Ascending aorta (tissue), 2 donors: ENCODE measurements at regions of chr2 and their contacts with region 1.

Region 1: DNA sequence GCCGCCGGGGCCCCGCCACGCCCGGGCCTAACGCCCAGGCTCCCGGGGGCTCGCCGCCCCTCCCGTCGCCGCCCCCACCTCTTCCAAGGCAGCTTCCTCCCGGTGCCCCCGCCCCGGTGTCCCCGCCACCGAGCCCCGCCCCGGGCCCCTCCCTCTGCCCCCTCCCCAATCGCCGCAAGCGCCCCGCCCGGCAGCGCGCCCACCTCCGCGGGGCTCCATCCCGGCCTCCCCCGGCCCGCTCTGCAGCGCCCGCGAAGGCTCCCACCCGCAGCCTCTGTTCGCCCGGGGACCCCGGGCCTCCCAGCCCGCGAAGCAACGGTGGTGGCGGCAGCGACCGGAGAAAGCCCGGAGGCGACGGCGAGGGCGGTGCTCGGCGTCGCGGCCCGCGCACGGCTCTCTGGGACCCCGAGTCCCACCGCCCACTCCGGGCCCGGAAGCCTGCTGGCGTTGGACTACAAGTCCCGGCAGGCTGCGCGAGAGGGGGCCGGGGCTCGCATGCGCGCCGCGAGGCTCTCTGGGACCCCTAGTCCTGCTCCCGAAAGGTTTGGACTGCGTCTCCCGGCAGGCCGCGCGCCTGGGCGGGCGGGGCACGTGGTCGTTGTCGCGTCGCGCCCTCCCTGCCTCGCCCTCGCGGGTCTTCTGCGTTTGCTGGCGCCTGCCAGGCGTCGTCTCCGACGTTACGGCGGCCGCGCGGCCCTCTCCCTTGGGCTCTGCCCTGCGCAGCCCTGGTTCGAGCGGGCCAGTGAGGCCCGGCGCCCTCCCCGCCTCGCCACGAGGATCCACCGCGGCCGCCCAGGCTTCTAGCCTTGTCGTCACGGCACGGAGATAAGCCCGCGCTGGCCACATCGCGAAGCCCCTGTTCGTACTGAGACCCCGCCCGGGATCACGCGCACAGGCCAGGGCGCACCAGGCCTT is at the start of gene STK25:
- DNase-seq: peak; percentile 91 to 98
- H3K4me3 ChIP-seq: peak within 1 kb of the TSS; percentile 88 to 95
- H3K27ac ChIP-seq: peak within 1 kb of the TSS; percentile 76 to 88
- H3K4me1 ChIP-seq: peaks cover 6 to 26% of the 10 kb centered on the region in 2 donors
- H3K27me3 ChIP-seq: no peaks in the 10 kb centered on the region
- CTCF ChIP-seq: no peak
- total RNA-seq, gene STK25: 259 TPM

Region 2: GRCh38 chr2:240560480-240561326 is 947.8 kb before region 1 on chr2:
- intact Hi-C with region 1: loop called (anchors 10 kb)
- DNase-seq: peak; percentile 96 to 100
- H3K4me3 ChIP-seq: peak overlapping the region; percentile 68 to 72
- H3K27ac ChIP-seq: peak overlapping the region; percentile 94 to 98
- H3K4me1 ChIP-seq: peaks cover 20 to 29% of the 10 kb centered on the region in 2 donors
- H3K27me3 ChIP-seq: no peaks in the 10 kb centered on the region
- CTCF ChIP-seq: peak; percentile 30 to 34 (median 34)

Region 3: DNA sequence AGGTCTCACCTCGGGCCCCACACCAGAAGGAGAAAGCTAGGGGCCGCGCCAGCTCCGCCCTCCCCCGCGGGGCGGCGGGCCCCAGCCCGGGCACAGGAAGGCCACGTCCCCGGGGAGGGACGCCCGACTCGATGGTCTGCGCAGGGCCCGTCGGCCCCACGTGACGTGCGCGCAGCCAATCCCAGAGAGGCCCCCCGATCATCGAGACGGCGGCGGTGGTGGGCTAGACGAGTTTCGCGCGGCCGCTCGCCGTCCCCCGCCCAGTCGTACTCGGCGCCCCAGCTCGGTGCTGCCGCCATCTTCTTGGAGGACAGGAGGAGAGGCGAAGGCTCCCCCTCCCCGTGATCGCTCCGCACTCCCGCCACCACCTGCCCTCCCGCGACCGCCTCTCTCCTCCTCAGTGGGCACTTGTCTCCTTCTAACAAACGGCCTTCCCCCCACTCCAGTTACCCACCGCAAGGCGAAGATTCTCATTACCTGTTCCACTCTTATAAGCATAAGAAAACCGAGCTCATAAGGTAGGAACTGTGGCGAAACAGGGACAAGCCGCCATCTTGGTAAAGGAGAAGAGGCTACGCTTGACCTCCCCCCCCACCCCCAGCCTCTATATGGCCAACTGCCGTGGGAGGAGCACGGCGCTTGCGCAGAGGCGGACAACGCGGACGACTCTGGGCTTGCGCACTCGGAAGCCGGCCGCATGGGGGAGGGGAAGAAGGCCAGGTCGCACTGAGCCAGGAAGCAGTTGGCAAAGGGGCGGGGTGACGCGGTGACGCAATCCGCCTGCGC is 193.2 kb before region 1 on chr2 and contains the start of gene HDLBP:
- intact Hi-C with region 1: loop called (anchors 1 kb)
- DNase-seq: peak; percentile 97 to 100
- H3K4me3 ChIP-seq: peak within 1 kb of the TSS; percentile 85 to 98
- H3K27ac ChIP-seq: peak within 1 kb of the TSS; percentile 99
- H3K4me1 ChIP-seq: peaks cover 0 to 33% of the 10 kb centered on the region in 2 donors
- H3K27me3 ChIP-seq: no peaks in the 10 kb centered on the region
- CTCF ChIP-seq: peak; percentile 16 to 28 (median 25)
- total RNA-seq, gene HDLBP: 308 TPM

Region 4: DNA sequence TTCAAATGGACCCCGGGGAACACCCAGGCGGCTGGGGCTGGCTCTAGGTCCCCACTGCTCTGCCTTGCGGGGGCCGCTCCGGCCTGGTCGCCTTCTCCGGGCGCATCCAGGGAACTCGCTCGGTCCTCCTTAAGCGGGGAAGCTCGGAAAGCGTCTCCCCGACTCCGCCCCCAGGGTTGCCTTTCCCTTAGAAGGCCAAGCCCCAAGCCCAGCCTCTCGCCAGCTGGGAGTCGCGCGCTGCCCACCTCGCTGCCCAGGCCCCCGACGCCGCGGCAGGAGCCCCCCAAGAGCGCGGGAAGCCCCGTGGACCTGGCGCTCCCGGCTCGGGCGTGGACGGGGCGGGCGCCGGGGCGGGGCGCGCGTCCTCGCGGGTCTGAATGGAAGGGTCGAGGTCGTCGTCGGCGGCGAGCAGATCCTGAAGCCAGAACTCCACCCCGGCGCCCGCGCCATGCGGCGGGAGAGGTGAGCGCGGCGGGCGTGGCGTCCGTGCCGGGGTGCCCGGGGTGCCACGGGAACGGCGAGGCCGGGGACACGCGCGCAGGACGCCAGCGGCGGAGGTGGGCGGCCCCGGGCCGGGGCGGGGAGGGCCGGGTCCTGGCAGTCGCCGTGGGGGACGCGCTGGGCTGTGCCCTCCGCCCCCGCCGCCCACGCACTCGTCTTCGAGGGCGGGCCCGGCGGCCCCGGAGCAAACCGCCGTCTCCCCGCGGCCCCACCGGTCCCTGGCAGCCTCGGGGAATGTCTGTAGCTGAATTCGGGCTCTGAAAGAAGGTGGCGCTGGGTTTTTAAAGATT is 50.2 kb after region 1 on chr2 and contains the start of gene BOK:
- intact Hi-C with region 1: loop called (anchors 2 kb)
- DNase-seq: no peak
- H3K4me3 ChIP-seq: peak within 1 kb of the TSS; percentile 62 to 82
- H3K27ac ChIP-seq: peak within 1 kb of the TSS in 1 of 2 donors; percentile 64
- H3K4me1 ChIP-seq: peaks cover 8 to 16% of the 10 kb centered on the region in 2 donors
- H3K27me3 ChIP-seq: no peaks in the 10 kb centered on the region
- CTCF ChIP-seq: no peak
- total RNA-seq, gene BOK: 35.4 TPM

Region 5: DNA sequence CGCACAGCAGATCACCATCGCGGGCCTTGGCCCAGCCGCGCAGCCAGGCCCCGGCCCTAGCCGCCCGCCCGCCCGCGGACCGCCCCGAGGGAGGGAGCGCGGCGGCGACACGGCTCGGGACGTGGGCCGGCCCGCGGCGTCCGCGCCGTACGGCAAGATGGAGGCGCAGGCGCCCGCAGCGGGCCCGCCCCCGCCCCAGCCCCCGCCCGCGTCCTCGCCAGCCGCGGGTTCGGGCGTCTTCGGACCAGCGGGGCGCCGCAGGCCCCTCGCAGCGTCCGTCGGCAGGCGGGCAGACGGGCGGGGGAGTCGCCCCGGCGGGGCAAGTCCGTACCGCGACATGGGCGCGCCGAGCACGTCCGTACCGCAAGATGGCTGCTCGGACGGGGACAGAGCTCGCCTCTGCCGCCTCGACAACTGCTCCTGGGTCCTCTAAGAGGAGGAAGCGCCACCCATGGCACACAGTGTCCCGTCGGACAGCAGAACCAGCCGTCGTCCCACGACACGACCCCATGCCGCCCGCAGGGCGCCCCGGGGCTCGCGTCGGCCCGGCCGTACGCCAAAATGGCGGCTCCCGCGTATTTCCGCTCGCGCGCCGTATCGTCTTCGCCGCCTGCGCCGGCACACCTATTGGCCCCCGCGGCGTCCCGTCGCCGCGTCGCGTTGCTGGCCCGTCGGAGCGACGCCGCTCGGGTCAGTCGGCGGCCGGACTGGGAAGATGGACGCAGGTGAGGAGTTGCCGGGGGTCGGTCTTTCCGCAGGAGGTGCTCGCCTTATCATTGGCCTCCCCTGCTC is 128.7 kb after region 1 on chr2 and contains the starts of genes ATG4B and THAP4:
- intact Hi-C with region 1: loop called (anchors 1 kb)
- DNase-seq: peak; percentile 26 to 88
- H3K4me3 ChIP-seq: peak within 1 kb of the TSS; percentile 89 to 100
- H3K27ac ChIP-seq: peak within 1 kb of the TSS; percentile 99
- H3K4me1 ChIP-seq: peaks cover 17 to 29% of the 10 kb centered on the region in 2 donors
- H3K27me3 ChIP-seq: no peaks in the 10 kb centered on the region
- CTCF ChIP-seq: no peak
- total RNA-seq, gene ATG4B: 225 TPM
- total RNA-seq, gene THAP4: 80.8 TPM

Region 6: DNA sequence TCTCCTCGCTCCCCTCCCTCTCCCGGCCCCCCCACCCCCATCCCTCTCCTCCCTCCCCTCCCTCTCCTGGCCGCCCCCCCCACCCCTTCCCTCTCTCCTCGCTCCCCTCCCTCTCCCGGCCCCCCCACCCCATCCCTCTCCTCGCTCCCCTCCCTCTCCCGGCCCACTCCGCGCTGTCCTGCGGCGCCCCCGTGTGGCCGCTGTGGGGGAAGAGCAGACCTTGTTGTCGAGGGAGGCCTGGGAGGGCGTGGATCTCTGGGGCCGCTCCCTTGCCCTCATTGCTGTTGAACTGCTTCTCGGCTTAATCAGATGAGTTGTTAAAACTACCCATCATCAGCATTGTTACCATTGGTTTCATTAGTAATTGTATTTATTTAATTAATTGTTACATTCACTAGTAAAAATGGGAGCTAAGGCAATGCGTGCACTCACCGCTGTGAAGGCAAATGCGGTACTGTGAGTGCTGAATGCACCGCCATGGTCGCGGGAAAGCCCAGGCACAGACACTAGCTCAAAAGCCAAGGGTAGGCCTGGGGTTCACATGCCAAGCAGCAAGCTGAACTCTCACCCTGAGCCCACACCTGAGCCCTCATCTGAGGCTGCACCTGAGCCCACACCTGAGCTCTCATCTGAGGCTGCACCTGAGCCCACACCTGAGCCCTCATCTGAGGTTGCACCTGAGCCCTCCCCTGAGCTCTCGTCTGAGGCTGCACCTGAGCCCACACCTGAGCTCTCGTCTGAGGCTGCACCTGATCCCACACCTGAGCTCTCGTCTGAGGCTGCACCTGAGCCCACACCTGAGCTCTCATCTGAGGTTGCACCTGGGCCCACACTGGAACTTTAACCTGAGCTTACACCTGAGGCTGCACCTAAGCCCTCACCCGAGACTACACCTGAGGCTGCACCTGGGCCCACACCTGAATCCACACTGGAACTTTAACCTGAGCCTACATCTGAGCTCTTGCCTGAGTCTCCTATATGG is 369.8 kb after region 1 on chr2:
- intact Hi-C with region 1: loop called (anchors 5 kb)
- DNase-seq: peak in 1 of 2 donors; percentile 81
- H3K4me3 ChIP-seq: no peak overlapping the region
- H3K27ac ChIP-seq: no peak overlapping the region
- H3K4me1 ChIP-seq: peaks cover 5 to 9% of the 10 kb centered on the region in 2 donors
- H3K27me3 ChIP-seq: no peaks in the 10 kb centered on the region
- CTCF ChIP-seq: peak; percentile 44 to 82 (median 78)